Heart left ventricle (tissue), 16 donors: ENCODE measurements at regions of chr6 and their contacts with region 1.

Region 1: GRCh38 chr6:132813173-132813856 is 1.1 kb upstream of the RPS12 start:
- DNase-seq: peak in 4 of 5 donors; percentile 25 to 51 (median 42)
- ATAC-seq: peak in 3 of 4 donors; percentile 2 to 20 (median 10)
- H3K4me3 ChIP-seq: peak overlapping the region; percentile 64 to 96 (median 81)
- H3K27ac ChIP-seq: peak overlapping the region; percentile 54 to 99 (median 86)
- H3K4me1 ChIP-seq: peaks cover 0 to 40% (median 25%) of the 10 kb centered on the region in 12 donors
- H3K27me3 ChIP-seq: no peaks in the 10 kb centered on the region
- CTCF ChIP-seq: no peak
- POLR2A ChIP-seq: no peak

Region 2: GRCh38 chr6:132190097-132190814 is 623.1 kb before region 1 on chr6:
- intact Hi-C with region 1: no loop called
- DNase-seq: no peak
- ATAC-seq: peak in 2 of 4 donors; percentile 41 to 58
- H3K4me3 ChIP-seq: no peak overlapping the region
- H3K27ac ChIP-seq: peak overlapping the region in 9 of 12 donors; percentile 7 to 63 (median 44)
- H3K4me1 ChIP-seq: peaks cover 0 to 19% (median 3%) of the 10 kb centered on the region in 12 donors
- H3K27me3 ChIP-seq: no peaks in the 10 kb centered on the region
- CTCF ChIP-seq: no peak
- POLR2A ChIP-seq: no peak

Region 3: GRCh38 chr6:132512638-132513632 is 300.4 kb before region 1 on chr6 and contains the start of gene STX7:
- intact Hi-C with region 1: loop called in 3 of 10 experiments (anchors 1 to 10 kb)
- DNase-seq: peak; percentile 91 to 96 (median 92)
- ATAC-seq: peak; percentile 95 to 99 (median 99)
- H3K4me3 ChIP-seq: peak within 1 kb of the TSS; percentile 55 to 92 (median 84)
- H3K27ac ChIP-seq: peak within 1 kb of the TSS; percentile 54 to 94 (median 90)
- H3K4me1 ChIP-seq: peaks cover 0 to 53% (median 35%) of the 10 kb centered on the region in 12 donors
- H3K27me3 ChIP-seq: no peaks in the 10 kb centered on the region
- CTCF ChIP-seq: peak in 1 of 12 donors; percentile 7
- POLR2A ChIP-seq: peak in 1 of 2 donors; percentile 89
- total RNA-seq, gene STX7: 24.8 to 78.8 (median 56.3) TPM

Region 4: DNA sequence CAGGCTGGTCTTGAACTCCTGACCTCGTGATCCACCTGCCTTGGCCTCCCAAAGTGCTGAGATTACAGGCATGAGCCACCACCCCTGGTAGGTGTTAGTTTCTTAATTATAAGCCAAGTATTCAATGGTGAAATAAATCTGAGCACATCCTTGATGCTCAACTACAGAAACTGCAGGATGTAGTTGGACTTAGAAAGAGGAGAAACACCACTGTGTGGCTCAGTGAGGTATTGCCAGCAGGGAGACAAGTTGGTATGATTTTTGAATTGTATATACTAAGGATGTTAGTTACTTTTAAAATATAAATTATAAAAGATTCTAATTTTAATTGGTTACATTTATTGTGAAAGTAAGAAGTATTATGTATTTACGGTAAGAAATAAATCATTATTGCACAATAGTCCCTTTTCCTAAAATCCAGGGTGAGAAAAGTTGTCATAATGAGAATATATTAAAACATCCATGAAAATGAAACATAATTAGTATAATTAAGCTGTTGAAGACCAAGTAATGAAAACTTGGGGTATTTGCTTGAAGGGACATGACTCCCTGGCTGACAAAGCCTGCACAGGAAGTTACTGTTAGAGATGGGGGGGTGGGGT is 32.4 kb before region 1 on chr6:
- intact Hi-C with region 1: no loop called
- DNase-seq: no peak
- ATAC-seq: no peak
- H3K4me3 ChIP-seq: no peak overlapping the region
- H3K27ac ChIP-seq: no peak overlapping the region
- H3K4me1 ChIP-seq: no peaks in the 10 kb centered on the region
- H3K27me3 ChIP-seq: no peaks in the 10 kb centered on the region
- CTCF ChIP-seq: peak in 7 of 12 donors; percentile 4 to 42 (median 28)
- POLR2A ChIP-seq: no peak

Region 5: DNA sequence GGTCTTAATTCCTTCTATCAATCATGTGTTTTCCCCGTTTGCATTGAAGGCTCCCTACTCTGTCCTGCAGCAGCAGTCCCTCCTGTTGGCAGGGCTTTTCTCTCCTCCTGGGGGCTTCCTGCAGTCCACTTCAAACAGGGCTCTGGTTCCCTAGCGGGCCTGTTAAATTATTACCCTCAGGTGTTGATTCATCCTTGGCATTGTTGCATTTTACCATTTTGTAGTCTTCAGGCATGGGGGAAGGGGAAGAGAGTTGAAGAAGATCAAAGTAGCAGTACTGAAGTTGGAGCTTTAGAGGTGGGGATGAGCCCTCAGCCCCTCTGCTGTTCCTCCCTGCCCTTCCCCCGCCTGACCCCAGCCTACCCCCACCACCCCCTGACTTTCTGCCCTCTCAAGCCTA is 597.3 kb after region 1 on chr6:
- intact Hi-C with region 1: no loop called
- DNase-seq: no peak
- ATAC-seq: no peak
- H3K4me3 ChIP-seq: no peak overlapping the region
- H3K27ac ChIP-seq: no peak overlapping the region
- H3K4me1 ChIP-seq: peaks cover 0 to 22% (median 0%) of the 10 kb centered on the region in 12 donors
- H3K27me3 ChIP-seq: no peaks in the 10 kb centered on the region
- CTCF ChIP-seq: no peak
- POLR2A ChIP-seq: no peak

Region 6: GRCh38 chr6:134058622-134059366 is 1245.5 kb after region 1 on chr6:
- intact Hi-C with region 1: loop called in 1 of 10 experiments (anchors 5 kb)
- DNase-seq: peak in 4 of 5 donors; percentile 49 to 63 (median 52)
- ATAC-seq: peak; percentile 82 to 89 (median 85)
- H3K4me3 ChIP-seq: no peak overlapping the region
- H3K27ac ChIP-seq: peak overlapping the region in 8 of 12 donors; percentile 62 to 86 (median 68)
- H3K4me1 ChIP-seq: peaks cover 0 to 43% (median 9%) of the 10 kb centered on the region in 12 donors
- H3K27me3 ChIP-seq: no peaks in the 10 kb centered on the region
- CTCF ChIP-seq: no peak
- POLR2A ChIP-seq: no peak